Heart left ventricle (tissue), 16 donors: ENCODE measurements at regions of chr21 and their contacts with region 1.

Region 1: DNA sequence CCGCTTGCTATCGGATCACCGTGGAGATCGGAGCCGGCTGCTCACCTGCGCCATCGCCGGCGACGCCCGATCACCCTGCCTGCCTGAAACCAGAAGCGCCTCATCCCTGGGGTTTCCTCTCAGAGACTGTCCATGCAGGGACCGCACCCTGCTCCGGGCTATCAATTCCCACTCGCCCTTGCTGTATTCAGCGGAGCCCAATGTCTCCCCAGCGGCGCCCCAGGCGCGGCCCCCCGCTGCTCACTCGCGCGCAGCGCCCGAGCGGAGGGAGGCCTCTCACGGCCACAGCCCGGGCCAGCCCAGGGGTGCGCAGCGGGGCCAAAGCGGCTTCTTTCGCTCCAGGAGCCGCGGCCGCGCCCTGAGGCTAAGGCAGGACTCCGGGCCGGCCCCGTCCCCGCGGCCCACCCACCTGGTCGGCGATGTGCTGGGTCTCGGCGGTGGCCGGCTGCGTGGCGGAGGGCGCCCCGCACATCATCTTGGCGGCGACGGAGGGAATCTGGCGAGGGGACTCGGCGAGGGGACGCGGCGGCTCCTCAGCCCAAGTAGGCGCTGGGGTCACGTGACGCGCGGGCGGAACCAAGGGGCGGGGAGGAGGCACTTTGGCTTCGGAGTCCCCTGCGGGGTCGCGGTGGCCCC is at the start of gene CSTB:
- DNase-seq: peak; percentile 88 to 92 (median 90)
- ATAC-seq: peak; percentile 36 to 87 (median 76)
- H3K4me3 ChIP-seq: peak within 1 kb of the TSS; percentile 69 to 99 (median 88)
- H3K27ac ChIP-seq: peak within 1 kb of the TSS; percentile 86 to 97 (median 92)
- H3K4me1 ChIP-seq: peaks cover 0 to 34% (median 15%) of the 10 kb centered on the region in 12 donors
- H3K27me3 ChIP-seq: no peaks in the 10 kb centered on the region
- CTCF ChIP-seq: peak in 1 of 12 donors; percentile 5
- POLR2A ChIP-seq: peak in 1 of 2 donors; percentile 61
- total RNA-seq, gene CSTB: 7.8 to 77.0 (median 35.9) TPM

Region 2: DNA sequence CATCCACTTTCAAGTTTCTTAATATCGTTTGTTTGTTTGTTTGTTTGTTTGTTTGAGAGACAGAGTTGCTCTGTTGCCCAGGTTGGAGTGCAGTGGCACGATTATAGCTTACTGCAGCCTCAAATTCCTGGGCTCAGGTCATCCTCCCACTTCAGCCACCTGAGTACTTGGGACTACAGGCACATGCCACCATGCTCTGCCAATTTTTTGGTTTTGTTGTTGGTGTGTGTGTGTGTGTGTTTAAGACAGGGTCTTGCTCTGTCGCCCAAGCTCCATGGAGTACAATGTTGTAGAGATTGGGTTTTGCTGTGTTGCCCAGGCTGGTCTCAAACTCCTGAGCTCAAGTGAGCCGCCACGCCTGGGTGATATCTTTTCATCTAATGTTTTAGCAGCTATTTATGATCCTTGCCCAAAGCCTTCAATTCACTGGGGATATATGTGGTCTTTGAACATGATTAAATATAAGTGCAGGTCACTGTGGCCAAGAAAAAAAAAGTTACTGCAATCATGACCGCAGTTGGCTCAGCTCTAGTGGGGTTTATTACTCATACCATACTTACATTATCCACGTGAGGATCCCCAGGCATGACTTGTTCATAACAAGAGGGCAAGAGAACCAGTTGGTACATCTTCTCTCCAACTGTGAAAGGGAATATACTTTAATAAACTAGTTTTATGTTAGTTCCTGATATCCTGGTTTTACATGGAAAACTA is 108.6 kb before region 1 on chr21:
- intact Hi-C with region 1: loop called in 1 of 10 experiments (anchors 10 kb)
- DNase-seq: no peak
- ATAC-seq: no peak
- H3K4me3 ChIP-seq: no peak overlapping the region
- H3K27ac ChIP-seq: no peak overlapping the region
- H3K4me1 ChIP-seq: peaks cover 0 to 9% (median 0%) of the 10 kb centered on the region in 12 donors
- H3K27me3 ChIP-seq: no peaks in the 10 kb centered on the region
- CTCF ChIP-seq: no peak
- POLR2A ChIP-seq: no peak

Region 3: DNA sequence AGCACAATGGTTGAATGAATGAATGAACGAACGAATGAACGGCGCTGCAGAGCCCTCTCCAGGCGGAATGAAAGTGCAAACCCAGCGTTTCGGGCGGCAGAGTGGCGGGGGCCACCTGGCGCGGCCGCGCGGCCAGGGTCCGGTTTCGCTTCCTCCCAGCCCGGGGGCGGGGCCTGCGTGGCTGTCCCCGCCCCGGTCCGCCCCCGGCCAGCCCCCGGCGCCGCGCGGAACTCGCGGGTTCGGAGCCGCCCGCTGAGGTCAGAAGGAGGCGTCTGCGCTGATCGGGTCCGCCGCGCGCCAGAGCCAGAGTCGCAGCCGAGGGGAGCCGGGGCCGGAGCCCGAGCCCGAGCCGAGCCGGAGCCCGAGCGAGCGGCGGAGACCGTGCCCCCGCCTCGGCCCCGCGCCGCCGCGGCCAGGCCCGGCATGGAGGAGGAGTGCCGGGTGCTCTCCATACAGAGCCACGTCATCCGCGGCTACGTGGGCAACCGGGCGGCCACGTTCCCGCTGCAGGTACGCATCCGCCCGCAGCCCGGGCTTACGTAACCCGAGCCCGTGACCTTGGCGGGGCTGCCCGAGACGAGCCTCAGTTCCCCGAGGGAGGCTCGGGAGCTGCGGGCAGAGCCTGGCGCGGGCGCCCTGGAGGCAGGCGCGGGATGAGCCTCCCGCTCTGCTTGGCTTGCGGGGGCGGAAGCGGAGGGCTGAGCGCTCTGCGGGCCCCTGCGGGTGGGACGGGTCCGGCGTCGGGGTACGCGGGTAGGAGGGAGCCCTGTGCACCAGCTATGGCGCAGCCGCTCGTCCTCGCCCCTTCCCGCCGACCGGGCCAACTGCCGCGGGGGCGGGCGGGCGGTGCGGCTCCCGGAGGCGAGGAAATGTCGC is 56.8 kb before region 1 on chr21 and contains the start of gene PDXK:
- intact Hi-C with region 1: loop called in 3 of 10 experiments (anchors 5 to 10 kb)
- DNase-seq: peak; percentile 86 to 95 (median 90)
- ATAC-seq: peak; percentile 78 to 94 (median 92)
- H3K4me3 ChIP-seq: peak within 1 kb of the TSS; percentile 71 to 100 (median 96)
- H3K27ac ChIP-seq: peak within 1 kb of the TSS; percentile 14 to 93 (median 80)
- H3K4me1 ChIP-seq: peaks cover 0 to 36% (median 27%) of the 10 kb centered on the region in 12 donors
- H3K27me3 ChIP-seq: no peaks in the 10 kb centered on the region
- CTCF ChIP-seq: peak in 2 of 12 donors; percentile 25 to 32
- POLR2A ChIP-seq: peak in 1 of 2 donors; percentile 81
- total RNA-seq, gene PDXK: 46.5 to 105 (median 79.7) TPM